GM12878 (cell line): ENCODE measurements at regions of chr2 and their contacts with region 1.

Region 1: GRCh38 chr2:143128681-143129580 is at the start of gene ARHGAP15:
- DNase-seq: peak; percentile 85
- ATAC-seq: peak; percentile 86
- H3K4me3 ChIP-seq: peak within 1 kb of the TSS; percentile 74
- H3K27ac ChIP-seq: peak within 1 kb of the TSS; percentile 88
- H3K4me1 ChIP-seq: peaks cover 10% of the 10 kb centered on the region
- H3K27me3 ChIP-seq: no peaks in the 10 kb centered on the region
- CTCF ChIP-seq: no peak
- EP300 ChIP-seq: peak; percentile 44 to 71; a peak in 3 of 4 replicates
- POLR2A ChIP-seq: peak; percentile 85
- RAD21 ChIP-seq: no peak
- polyA plus RNA-seq, gene ARHGAP15: 66.6 to 69.9 TPM

Region 2: DNA sequence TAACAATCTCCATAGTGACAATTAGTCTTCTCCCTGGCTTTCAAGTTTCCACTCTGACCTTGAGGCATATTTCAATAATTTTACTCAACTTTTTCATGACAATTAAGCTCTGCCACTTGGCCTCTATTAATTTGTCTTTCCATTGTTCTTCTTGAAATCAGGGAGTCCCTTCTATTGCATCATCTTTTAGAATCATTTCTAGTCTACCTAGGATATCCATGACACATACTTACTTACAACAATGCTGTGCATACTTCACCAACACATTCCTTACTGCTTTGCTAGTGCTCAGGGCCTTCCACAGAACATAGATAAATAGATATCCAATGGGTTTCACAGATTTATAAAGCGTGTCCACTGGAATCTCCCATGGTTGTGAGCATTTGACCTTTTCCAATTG is 666.6 kb before region 1 on chr2:
- CTCF ChIA-PET with region 1: no interaction called
- POLR2A ChIA-PET with region 1: no interaction called
- RAD21 ChIA-PET with region 1: no interaction called
- SMC1A ChIA-PET with region 1: no interaction called
- in situ Hi-C with region 1: no loop called
- intact Hi-C with region 1: no loop called
- DNase-seq: no peak
- ATAC-seq: no peak
- H3K4me3 ChIP-seq: no peak overlapping the region
- H3K27ac ChIP-seq: no peak overlapping the region
- H3K4me1 ChIP-seq: no peaks in the 10 kb centered on the region
- H3K27me3 ChIP-seq: no peaks in the 10 kb centered on the region
- CTCF ChIP-seq: no peak
- EP300 ChIP-seq: no peak
- POLR2A ChIP-seq: no peak
- RAD21 ChIP-seq: no peak

Region 3: GRCh38 chr2:142997231-142997630 is 131.7 kb before region 1 on chr2:
- CTCF ChIA-PET with region 1: no interaction called
- POLR2A ChIA-PET with region 1: no interaction called
- RAD21 ChIA-PET with region 1: no interaction called
- SMC1A ChIA-PET with region 1: no interaction called
- in situ Hi-C with region 1: no loop called
- intact Hi-C with region 1: no loop called
- DNase-seq: no peak
- ATAC-seq: no peak
- H3K4me3 ChIP-seq: no peak overlapping the region
- H3K27ac ChIP-seq: no peak overlapping the region
- H3K4me1 ChIP-seq: no peaks in the 10 kb centered on the region
- H3K27me3 ChIP-seq: no peaks in the 10 kb centered on the region
- CTCF ChIP-seq: no peak
- EP300 ChIP-seq: no peak
- POLR2A ChIP-seq: no peak
- RAD21 ChIP-seq: no peak

Region 4: DNA sequence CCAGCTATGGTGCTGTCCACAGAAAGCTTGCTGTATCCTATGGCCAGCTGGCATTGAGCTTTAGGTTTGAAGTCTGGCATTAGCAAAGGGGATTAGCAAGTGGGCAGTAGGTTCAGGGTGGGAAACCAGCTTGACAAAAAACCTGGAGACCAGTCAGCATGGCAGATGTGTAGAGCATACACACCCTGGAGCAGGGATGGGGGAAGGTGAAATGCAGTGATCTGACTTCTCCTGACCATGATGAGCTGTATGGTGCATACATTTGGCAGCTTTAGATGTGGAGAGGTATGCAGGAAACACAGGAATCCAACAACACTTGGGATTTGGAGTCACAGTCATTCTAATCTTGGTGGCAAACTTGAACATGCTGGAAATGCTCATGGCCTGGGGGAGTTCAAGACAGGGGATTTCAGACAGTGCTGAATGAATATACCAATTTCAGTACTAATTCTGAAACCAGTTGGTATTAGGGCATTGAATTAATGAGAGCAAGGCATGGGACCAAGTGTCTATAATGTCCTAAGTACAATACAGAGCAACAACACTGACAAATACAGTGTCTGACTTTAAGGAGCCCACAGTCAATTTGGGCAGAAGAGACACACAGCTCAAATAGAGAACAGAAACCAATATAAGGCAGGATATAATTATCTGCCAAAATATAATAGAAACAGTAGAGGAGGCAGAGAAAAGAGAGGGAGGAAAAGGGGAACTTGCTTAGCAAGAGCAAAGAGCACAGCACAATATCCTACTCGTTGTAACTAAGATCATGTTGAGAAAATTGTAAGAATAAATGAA is 12.1 kb after region 1 on chr2:
- CTCF ChIA-PET with region 1: interaction called, 88 read pairs
- POLR2A ChIA-PET with region 1: interaction called, 129 read pairs
- RAD21 ChIA-PET with region 1: interaction called, 91 read pairs
- SMC1A ChIA-PET with region 1: interaction called, 148 read pairs
- in situ Hi-C with region 1: no loop called
- intact Hi-C with region 1: loop called (anchors 1 kb)
- DNase-seq: peak; percentile 71
- ATAC-seq: peak; percentile 87
- H3K4me3 ChIP-seq: peak overlapping the region; percentile 54
- H3K27ac ChIP-seq: peak overlapping the region; percentile 93
- H3K4me1 ChIP-seq: peaks cover 29% of the 10 kb centered on the region
- H3K27me3 ChIP-seq: no peaks in the 10 kb centered on the region
- CTCF ChIP-seq: no peak
- EP300 ChIP-seq: no peak
- POLR2A ChIP-seq: no peak
- RAD21 ChIP-seq: 0 out of 2 replicates have a peak, but pooled peaks have one; percentile 3

Region 5: DNA sequence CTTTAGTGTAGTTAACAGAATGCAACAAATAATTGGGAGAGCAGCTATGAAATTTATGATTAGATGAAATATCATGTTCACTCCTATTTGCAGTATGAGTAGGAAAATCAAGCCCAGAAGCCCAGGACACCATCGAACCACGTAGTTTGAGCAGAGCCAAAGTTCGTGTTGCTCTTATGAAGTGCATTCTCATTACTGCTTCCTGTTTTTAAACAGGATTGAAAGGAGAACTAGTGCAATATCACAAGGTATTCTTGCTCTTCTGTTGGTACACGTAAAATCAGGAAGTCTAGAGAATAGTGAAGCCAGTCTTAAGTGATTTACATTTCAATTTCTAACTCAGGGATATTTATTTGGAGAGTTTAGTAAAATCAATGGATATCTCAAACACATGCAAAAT is 21.4 kb after region 1 on chr2:
- CTCF ChIA-PET with region 1: interaction called, 88 read pairs
- POLR2A ChIA-PET with region 1: interaction called, 129 read pairs
- RAD21 ChIA-PET with region 1: interaction called, 35 read pairs
- SMC1A ChIA-PET with region 1: interaction called, 110 read pairs
- in situ Hi-C with region 1: no loop called
- intact Hi-C with region 1: no loop called
- DNase-seq: no peak
- ATAC-seq: peak; percentile 67
- H3K4me3 ChIP-seq: no peak overlapping the region
- H3K27ac ChIP-seq: peak overlapping the region; percentile 48
- H3K4me1 ChIP-seq: peaks cover 33% of the 10 kb centered on the region
- H3K27me3 ChIP-seq: no peaks in the 10 kb centered on the region
- CTCF ChIP-seq: no peak
- EP300 ChIP-seq: no peak
- POLR2A ChIP-seq: no peak
- RAD21 ChIP-seq: no peak

Region 6: GRCh38 chr2:143183804-143184463 is 55.0 kb after region 1 on chr2:
- CTCF ChIA-PET with region 1: no interaction called
- POLR2A ChIA-PET with region 1: no interaction called
- RAD21 ChIA-PET with region 1: interaction called, 3 read pairs
- SMC1A ChIA-PET with region 1: interaction called, 13 read pairs
- in situ Hi-C with region 1: no loop called
- intact Hi-C with region 1: no loop called
- DNase-seq: peak; percentile 27
- ATAC-seq: peak; percentile 80
- H3K4me3 ChIP-seq: no peak overlapping the region
- H3K27ac ChIP-seq: peak overlapping the region; percentile 6; the same call in 1 of the 2 replicates
- H3K4me1 ChIP-seq: peaks cover 9% of the 10 kb centered on the region
- H3K27me3 ChIP-seq: no peaks in the 10 kb centered on the region
- CTCF ChIP-seq: no peak
- EP300 ChIP-seq: no peak
- POLR2A ChIP-seq: no peak
- RAD21 ChIP-seq: no peak

Region 7: DNA sequence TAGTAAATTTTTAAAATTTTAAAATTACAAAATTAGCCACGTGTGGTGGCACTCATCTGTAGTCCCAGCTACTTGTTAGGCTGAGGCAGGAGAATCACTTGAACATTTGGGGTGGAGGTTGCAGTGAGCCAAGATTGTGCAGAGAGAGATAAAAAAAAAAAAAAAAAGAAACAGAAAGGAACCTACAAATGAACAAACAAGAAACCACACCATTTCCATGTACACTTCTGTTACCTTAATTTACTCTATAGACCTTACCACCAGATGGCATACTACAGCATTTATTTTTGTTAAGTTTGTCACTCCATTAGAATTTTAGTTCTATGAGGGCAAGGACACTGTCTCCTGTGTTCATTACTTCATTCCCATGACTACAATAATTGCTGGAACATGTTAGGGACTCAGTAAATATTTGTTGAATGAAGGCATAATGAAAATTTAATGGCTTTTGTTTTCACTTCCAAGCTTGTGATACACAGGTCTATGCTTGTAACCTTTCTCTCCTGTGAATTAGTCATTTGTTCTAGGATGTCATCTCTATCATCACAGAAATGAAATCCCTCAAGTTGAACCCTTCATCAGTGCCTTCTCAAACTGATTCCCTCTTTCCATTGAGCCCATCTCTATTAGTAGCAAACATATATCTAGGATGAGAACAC is 76.3 kb after region 1 on chr2:
- CTCF ChIA-PET with region 1: interaction called, 6 read pairs
- POLR2A ChIA-PET with region 1: no interaction called
- RAD21 ChIA-PET with region 1: no interaction called
- SMC1A ChIA-PET with region 1: interaction called, 10 read pairs
- in situ Hi-C with region 1: no loop called
- intact Hi-C with region 1: no loop called
- DNase-seq: no peak
- ATAC-seq: peak; percentile 81
- H3K4me3 ChIP-seq: no peak overlapping the region
- H3K27ac ChIP-seq: no peak overlapping the region
- H3K4me1 ChIP-seq: no peaks in the 10 kb centered on the region
- H3K27me3 ChIP-seq: no peaks in the 10 kb centered on the region
- CTCF ChIP-seq: peak in 1 of 3 experiments; percentile 43; a peak in 3 of 6 replicates
- EP300 ChIP-seq: no peak
- POLR2A ChIP-seq: no peak
- RAD21 ChIP-seq: 0 out of 2 replicates have a peak, but pooled peaks have one; percentile 3

Region 8: GRCh38 chr2:143223556-143223955 is 94.6 kb after region 1 on chr2:
- CTCF ChIA-PET with region 1: interaction called, 14 read pairs
- POLR2A ChIA-PET with region 1: no interaction called
- RAD21 ChIA-PET with region 1: interaction called, 6 read pairs
- SMC1A ChIA-PET with region 1: interaction called, 5 read pairs
- in situ Hi-C with region 1: no loop called
- intact Hi-C with region 1: no loop called
- DNase-seq: no peak
- ATAC-seq: no peak
- H3K4me3 ChIP-seq: no peak overlapping the region
- H3K27ac ChIP-seq: no peak overlapping the region
- H3K4me1 ChIP-seq: no peaks in the 10 kb centered on the region
- H3K27me3 ChIP-seq: no peaks in the 10 kb centered on the region
- CTCF ChIP-seq: no peak
- EP300 ChIP-seq: no peak
- POLR2A ChIP-seq: no peak
- RAD21 ChIP-seq: no peak